ENCODE measurements at regions of chr10 and their contacts with region 1.

Region 1: GRCh38 chr10:124388823-124389612 is 29.7 kb downstream of the OAT start:
- DNase-seq: peak; percentile 80 to 98 (median 91)
- ATAC-seq: peak; percentile 99
- H3K4me3 ChIP-seq: peak overlapping the region; percentile 68
- H3K4me3 Mint-ChIP-seq: peak overlapping the region in 7 of 10 donors; percentile 25 to 71 (median 59)
- H3K27ac ChIP-seq: peak overlapping the region; percentile 62
- H3K27ac Mint-ChIP-seq: peak overlapping the region in 1 of 9 donors; percentile 49
- H3K4me1 ChIP-seq: peaks cover 4 to 5% of the 10 kb centered on the region in 2 donors
- H3K4me1 Mint-ChIP-seq: peaks cover 0 to 2% (median 0%) of the 10 kb centered on the region in 7 donors
- H3K27me3 ChIP-seq: no peaks in the 10 kb centered on the region
- H3K27me3 Mint-ChIP-seq: peaks cover 0 to 7% (median 5%) of the 10 kb centered on the region in 5 donors

Region 2: DNA sequence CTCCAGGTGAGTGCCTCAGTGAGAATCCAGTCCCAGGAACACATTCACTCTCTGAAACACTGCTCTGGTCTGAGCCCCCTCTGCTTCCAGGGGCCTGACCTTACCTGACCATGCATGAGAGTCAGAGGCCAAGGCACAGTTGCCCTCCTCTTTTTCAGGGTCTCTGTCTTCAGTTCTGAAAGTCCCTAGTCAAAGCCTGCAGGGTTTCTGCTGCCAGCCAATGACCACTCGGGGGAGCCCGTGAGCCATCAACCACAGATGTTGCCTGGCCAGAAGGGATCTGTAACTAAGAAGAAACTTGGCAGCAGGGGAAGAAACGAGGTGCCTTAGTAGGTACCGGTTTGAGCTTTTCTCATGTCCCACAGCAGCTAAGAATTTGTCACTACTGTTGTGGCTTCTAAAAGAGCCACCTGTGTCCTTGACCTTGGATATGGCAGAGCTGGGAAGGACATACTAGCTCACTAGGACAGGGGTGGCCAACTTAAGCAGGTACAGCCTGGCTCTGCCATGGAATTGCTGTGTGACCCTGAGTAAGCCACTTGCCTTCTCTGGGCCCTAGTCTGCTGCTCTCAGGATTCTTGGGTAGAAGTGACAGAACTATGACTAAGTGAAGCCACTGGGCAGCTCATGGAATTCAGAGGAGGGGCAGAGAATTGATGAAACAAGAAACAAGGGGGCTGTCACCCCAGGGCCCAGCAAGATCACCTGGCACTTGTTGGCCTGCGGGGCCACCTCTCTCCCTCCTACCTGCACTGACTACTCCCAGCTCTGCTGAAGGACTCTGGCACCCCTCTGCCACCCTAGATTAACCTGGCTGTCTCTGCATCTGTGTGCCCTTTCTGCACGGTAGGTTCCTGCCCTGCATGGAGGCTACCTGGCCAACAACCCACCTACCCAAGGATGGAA is 806.7 kb before region 1 on chr10:
- CTCF ChIA-PET with region 1: interaction called, 4 read pairs
- POLR2A ChIA-PET with region 1: no interaction called
- intact Hi-C with region 1: loop called in 1 of 2 experiments (anchors 1 kb)
- DNase-seq: peak in 7 of 9 donors; percentile 38 to 61 (median 46)
- ATAC-seq: peak; percentile 64
- H3K4me3 ChIP-seq: no peak overlapping the region
- H3K4me3 Mint-ChIP-seq: no peak overlapping the region
- H3K27ac ChIP-seq: no peak overlapping the region
- H3K27ac Mint-ChIP-seq: no peak overlapping the region
- H3K4me1 ChIP-seq: no peaks in the 10 kb centered on the region
- H3K4me1 Mint-ChIP-seq: peaks cover 0 to 3% (median 0%) of the 10 kb centered on the region in 7 donors
- H3K27me3 ChIP-seq: peaks cover 0 to 2% of the 10 kb centered on the region in 2 donors
- H3K27me3 Mint-ChIP-seq: peaks cover 17 to 80% (median 44%) of the 10 kb centered on the region in 5 donors

Region 3: GRCh38 chr10:124025660-124026588 is 363.1 kb before region 1 on chr10:
- CTCF ChIA-PET with region 1: interaction called, 3 read pairs
- POLR2A ChIA-PET with region 1: no interaction called
- intact Hi-C with region 1: loop called in 1 of 2 experiments (anchors 1 kb)
- DNase-seq: peak in 1 of 9 donors; percentile 8
- ATAC-seq: peak; percentile 48
- H3K4me3 ChIP-seq: no peak overlapping the region
- H3K4me3 Mint-ChIP-seq: peak overlapping the region in 1 of 10 donors; percentile 4
- H3K27ac ChIP-seq: no peak overlapping the region
- H3K27ac Mint-ChIP-seq: no peak overlapping the region
- H3K4me1 ChIP-seq: no peaks in the 10 kb centered on the region
- H3K4me1 Mint-ChIP-seq: peaks cover 0 to 14% (median 8%) of the 10 kb centered on the region in 7 donors
- H3K27me3 ChIP-seq: no peaks in the 10 kb centered on the region
- H3K27me3 Mint-ChIP-seq: peaks cover 0 to 4% (median 3%) of the 10 kb centered on the region in 5 donors

Region 4: DNA sequence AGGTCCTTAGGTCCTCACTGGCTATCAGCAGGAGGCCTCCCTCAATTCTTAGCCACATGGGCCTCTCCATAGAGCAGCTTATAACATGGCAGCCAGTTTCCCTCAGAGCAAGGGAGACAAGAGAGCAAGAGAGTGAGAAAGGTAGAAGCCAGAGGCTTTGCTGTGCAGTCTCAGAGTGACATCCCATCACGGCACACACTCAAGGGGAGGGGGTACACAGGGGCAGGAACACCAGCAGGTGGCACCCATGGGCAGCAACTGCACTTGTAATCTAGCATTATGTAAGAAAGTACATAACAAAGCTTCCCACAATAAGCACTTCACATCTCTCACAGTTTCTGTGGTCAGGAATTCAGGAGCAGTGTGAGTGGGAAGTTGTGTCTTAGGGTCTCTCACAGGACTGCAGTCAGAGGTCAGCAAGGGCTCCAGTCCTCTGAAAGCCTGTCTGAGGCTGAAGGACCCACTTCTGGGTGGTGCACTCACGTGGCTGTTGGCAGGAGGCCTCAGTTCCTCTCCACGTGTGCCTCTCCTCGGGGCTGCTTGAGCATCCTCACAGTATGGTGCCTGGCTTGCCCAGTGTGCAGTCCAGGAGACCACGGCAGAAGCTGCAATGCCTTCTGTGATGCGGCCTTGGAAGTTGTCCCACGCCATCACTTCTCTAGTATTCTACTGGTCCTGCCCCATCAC is 129.7 kb before region 1 on chr10:
- CTCF ChIA-PET with region 1: no interaction called
- POLR2A ChIA-PET with region 1: no interaction called
- intact Hi-C with region 1: loop called (anchors 1 kb)
- DNase-seq: no peak
- ATAC-seq: no peak
- H3K4me3 ChIP-seq: no peak overlapping the region
- H3K4me3 Mint-ChIP-seq: no peak overlapping the region
- H3K27ac ChIP-seq: no peak overlapping the region
- H3K27ac Mint-ChIP-seq: no peak overlapping the region
- H3K4me1 ChIP-seq: no peaks in the 10 kb centered on the region
- H3K4me1 Mint-ChIP-seq: no peaks in the 10 kb centered on the region
- H3K27me3 ChIP-seq: no peaks in the 10 kb centered on the region
- H3K27me3 Mint-ChIP-seq: peaks cover 0 to 1% (median 0%) of the 10 kb centered on the region in 5 donors

Region 5: GRCh38 chr10:124306922-124307371 is 82.1 kb before region 1 on chr10:
- CTCF ChIA-PET with region 1: no interaction called
- POLR2A ChIA-PET with region 1: no interaction called
- intact Hi-C with region 1: no loop called
- DNase-seq: no peak
- ATAC-seq: peak; percentile 91
- H3K4me3 ChIP-seq: no peak overlapping the region
- H3K4me3 Mint-ChIP-seq: no peak overlapping the region
- H3K27ac ChIP-seq: no peak overlapping the region
- H3K27ac Mint-ChIP-seq: no peak overlapping the region
- H3K4me1 ChIP-seq: no peaks in the 10 kb centered on the region
- H3K4me1 Mint-ChIP-seq: peaks cover 0 to 3% (median 0%) of the 10 kb centered on the region in 7 donors
- H3K27me3 ChIP-seq: no peaks in the 10 kb centered on the region
- H3K27me3 Mint-ChIP-seq: peaks cover 0 to 2% (median 0%) of the 10 kb centered on the region in 5 donors

Region 6: DNA sequence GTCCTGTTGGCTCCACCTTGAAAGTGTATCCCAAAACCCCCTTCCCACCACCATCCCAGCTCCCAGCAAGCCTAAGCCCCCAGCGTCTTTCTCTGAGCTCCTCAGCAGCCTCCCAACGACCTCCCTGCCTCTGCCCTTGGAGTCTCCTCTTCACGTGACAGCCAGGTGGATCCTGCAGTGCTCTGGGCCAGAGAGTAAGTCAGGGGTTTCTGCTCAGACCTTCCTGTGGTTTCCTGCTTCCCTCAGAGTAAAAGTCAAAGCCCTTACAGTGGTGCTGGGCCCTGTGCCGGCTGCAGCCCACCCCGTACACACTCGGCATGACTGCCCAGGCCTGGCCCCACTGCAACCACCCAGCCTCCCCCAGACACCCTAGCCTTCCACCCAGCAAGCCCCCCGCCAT is 22.2 kb before region 1 on chr10:
- CTCF ChIA-PET with region 1: no interaction called
- POLR2A ChIA-PET with region 1: no interaction called
- intact Hi-C with region 1: no loop called
- DNase-seq: no peak
- ATAC-seq: no peak
- H3K4me3 ChIP-seq: no peak overlapping the region
- H3K4me3 Mint-ChIP-seq: no peak overlapping the region
- H3K27ac ChIP-seq: no peak overlapping the region
- H3K27ac Mint-ChIP-seq: no peak overlapping the region
- H3K4me1 ChIP-seq: no peaks in the 10 kb centered on the region
- H3K4me1 Mint-ChIP-seq: peaks cover 0 to 7% (median 0%) of the 10 kb centered on the region in 7 donors
- H3K27me3 ChIP-seq: no peaks in the 10 kb centered on the region
- H3K27me3 Mint-ChIP-seq: peaks cover 3 to 18% (median 16%) of the 10 kb centered on the region in 5 donors

Region 7: GRCh38 chr10:124418726-124419501 is 29.9 kb after region 1 on chr10 and contains the start of gene OAT:
- CTCF ChIA-PET with region 1: interaction called, 4 read pairs
- POLR2A ChIA-PET with region 1: interaction called, 3 read pairs
- intact Hi-C with region 1: loop called (anchors 1 kb)
- DNase-seq: peak; percentile 90 to 96 (median 94)
- ATAC-seq: peak; percentile 99
- H3K4me3 ChIP-seq: peak within 1 kb of the TSS; percentile 76
- H3K4me3 Mint-ChIP-seq: peak within 1 kb of the TSS; percentile 80 to 91 (median 84)
- H3K27ac ChIP-seq: peak within 1 kb of the TSS; percentile 80
- H3K27ac Mint-ChIP-seq: peak within 1 kb of the TSS in 8 of 9 donors; percentile 31 to 90 (median 83)
- H3K4me1 ChIP-seq: peaks cover 8 to 10% of the 10 kb centered on the region in 2 donors
- H3K4me1 Mint-ChIP-seq: peaks cover 8 to 41% (median 31%) of the 10 kb centered on the region in 7 donors
- H3K27me3 ChIP-seq: no peaks in the 10 kb centered on the region
- H3K27me3 Mint-ChIP-seq: peaks cover 0 to 18% (median 2%) of the 10 kb centered on the region in 5 donors
- total RNA-seq, gene OAT: 29.6 to 47.0 (median 39.1) TPM

Region 8: DNA sequence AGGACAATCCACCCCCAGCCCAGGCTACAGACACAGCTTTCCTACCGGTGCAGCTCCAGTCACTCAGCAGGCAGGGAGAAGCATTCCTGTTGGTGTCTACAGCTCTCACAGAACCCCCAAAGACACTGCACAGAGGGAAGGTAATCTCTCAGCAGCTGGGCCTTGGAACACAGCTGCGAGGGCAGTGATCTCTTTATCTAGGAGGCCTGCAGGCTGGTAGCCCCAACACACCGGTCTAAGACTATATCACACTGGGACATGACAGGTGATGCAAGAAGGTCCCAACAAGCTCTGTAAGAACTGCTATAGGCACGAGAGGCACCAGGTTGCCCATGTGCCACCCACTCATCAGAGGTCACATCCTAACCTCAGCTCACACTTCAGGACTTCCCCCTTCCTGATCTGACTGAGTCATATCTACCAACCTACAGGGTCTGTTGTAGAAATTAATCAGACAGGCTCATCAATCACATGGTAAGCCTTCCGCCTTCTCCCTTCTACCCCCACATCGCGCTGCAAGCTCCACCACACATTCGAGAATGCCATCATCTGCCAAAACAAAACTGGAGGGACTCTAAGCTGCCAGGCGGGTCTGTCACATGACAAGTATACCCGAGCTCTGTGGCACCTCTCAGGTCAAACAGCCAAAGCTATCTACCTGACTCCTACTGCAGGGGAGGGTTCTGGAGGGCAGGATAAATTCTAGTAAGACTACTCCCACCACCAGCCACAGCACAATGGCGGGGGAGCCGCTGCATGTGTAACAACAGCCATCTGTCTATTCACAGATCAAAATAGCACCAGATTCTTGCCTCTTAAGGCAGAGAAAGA is 329.1 kb after region 1 on chr10:
- CTCF ChIA-PET with region 1: no interaction called
- POLR2A ChIA-PET with region 1: no interaction called
- intact Hi-C with region 1: no loop called
- DNase-seq: peak in 8 of 9 donors; percentile 38 to 90 (median 66)
- ATAC-seq: peak; percentile 85
- H3K4me3 ChIP-seq: peak overlapping the region; percentile 19
- H3K4me3 Mint-ChIP-seq: peak overlapping the region; percentile 46 to 91 (median 74)
- H3K27ac ChIP-seq: peak overlapping the region; percentile 72
- H3K27ac Mint-ChIP-seq: peak overlapping the region; percentile 83 to 99 (median 94)
- H3K4me1 ChIP-seq: peaks cover 82 to 96% of the 10 kb centered on the region in 2 donors
- H3K4me1 Mint-ChIP-seq: peaks cover 78 to 99% (median 88%) of the 10 kb centered on the region in 7 donors
- H3K27me3 ChIP-seq: no peaks in the 10 kb centered on the region
- H3K27me3 Mint-ChIP-seq: no peaks in the 10 kb centered on the region